ENCODE measurements at regions of chr16 and their contacts with region 1.

Region 1: DNA sequence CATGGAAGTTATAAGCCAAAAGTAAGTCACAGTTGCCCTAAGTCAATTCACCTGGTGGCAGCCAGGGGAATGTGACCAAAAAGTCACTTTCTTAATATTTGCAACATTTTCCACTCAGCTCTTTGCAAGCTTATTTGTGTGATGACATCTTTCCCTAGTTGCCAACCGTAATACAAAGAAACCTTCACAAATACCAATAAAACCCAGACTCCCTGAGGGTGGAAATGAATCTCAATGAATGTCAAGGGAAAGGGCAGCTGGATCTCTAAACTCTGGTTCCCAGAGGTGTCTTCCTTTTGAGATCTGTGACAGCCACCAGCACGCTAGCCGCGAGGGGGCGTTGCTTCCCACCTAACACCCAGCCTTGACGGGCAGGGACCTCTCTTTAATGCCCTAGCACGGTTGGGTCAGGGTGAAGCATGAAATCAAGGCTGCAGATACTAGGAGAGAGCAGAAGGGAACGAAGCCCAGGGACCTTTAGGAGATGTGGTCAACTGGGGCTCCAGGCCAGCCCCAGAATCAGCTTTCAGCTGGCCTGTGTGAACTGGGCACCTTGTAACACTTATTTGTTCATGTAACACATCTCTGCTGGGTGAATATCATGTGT is 82.2 kb downstream of the CMC2 start:
- DNase-seq: no peak
- H3K4me3 ChIP-seq: no peak overlapping the region
- CTCF ChIP-seq: peak; percentile 90

Region 2: DNA sequence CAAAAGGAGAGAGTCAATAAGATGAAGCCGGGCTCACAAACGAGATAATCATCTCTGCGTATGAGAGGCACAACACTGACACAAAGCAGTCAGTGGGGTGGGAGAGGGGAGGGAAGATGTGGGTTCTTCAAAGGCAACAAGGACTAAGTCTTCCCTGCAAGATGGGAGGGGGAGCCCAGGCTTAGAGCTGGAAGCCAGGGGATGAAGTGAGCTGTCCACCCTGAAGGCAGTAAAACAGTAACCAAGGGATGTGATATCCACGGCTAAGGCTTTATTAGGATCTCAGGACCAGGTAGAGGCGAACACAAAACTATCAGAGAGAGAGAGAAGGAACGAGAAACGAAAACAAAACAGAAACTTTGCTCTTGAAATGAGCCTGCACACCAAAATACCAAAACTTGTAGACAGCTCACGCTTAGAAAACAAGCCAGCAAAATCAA is 267.7 kb before region 1 on chr16:
- CTCF ChIA-PET with region 1: no interaction called
- POLR2A ChIA-PET with region 1: no interaction called
- DNase-seq: no peak
- H3K4me3 ChIP-seq: no peak overlapping the region
- CTCF ChIP-seq: no peak

Region 3: GRCh38 chr16:80909720-80910119 is 14.8 kb before region 1 on chr16:
- CTCF ChIA-PET with region 1: interaction called, 21 read pairs
- POLR2A ChIA-PET with region 1: no interaction called
- DNase-seq: no peak
- H3K4me3 ChIP-seq: no peak overlapping the region
- CTCF ChIP-seq: no peak

Region 4: DNA sequence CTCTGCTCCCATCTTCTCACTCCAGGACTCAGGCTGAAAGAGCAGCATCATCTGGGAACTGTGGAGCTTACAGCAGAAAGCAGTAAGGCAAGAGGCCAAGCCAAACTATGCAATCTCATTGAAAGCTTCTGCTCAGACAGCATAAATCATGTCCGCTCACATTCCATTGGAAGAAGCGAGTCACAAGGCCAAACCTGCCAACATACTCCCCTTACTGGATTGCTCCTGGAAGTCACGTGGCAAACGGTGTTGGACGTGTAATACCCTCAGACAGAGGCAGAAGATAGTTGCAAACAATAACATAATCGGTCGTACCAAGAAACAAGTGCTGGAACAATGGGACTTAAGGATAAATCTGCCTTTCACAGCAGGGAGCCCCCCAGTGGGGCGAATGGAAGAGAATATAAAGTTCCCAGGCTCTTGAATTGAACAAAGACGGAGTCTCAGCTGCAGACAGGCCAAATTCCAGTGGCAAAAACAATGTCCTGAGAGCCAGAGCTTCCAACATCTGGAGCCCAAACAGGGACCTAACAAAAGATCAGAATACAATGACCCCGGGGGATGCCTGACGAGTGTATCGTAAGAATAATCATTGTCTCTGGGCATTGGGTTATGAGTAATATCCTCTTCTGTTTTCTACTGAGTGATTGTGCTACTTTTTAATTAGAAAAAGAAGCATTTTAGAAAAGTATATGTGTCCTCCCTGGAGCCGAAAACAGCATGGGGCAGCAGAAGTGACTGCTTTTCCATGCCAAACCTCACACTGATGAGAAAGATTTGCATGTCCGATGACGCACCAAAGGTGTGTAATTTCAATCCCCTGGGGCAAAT is 13.8 kb after region 1 on chr16:
- CTCF ChIA-PET with region 1: interaction called, 28 read pairs
- POLR2A ChIA-PET with region 1: interaction called, 3 read pairs
- DNase-seq: peak; percentile 99
- H3K4me3 ChIP-seq: peak overlapping the region; percentile 31
- CTCF ChIP-seq: no peak

Region 5: GRCh38 chr16:81095953-81096717 is 171.7 kb after region 1 on chr16 and contains the start of gene GCSH:
- CTCF ChIA-PET with region 1: no interaction called
- POLR2A ChIA-PET with region 1: no interaction called
- DNase-seq: peak; percentile 87
- H3K4me3 ChIP-seq: peak within 1 kb of the TSS; percentile 75
- CTCF ChIP-seq: no peak

Region 6: GRCh38 chr16:81223391-81223829 is 298.9 kb after region 1 on chr16:
- CTCF ChIA-PET with region 1: no interaction called
- POLR2A ChIA-PET with region 1: no interaction called
- DNase-seq: no peak
- H3K4me3 ChIP-seq: no peak overlapping the region
- CTCF ChIP-seq: no peak